CD14-positive monocyte (primary cell): ENCODE measurements at regions of chr9 and their contacts with region 1.

Region 1: GRCh38 chr9:102521097-102521755 is 473.9 kb upstream of the CYLC2 start:
- DNase-seq: no peak
- H3K4me3 ChIP-seq: no peak overlapping the region
- H3K4me3 Mint-ChIP-seq: no peak overlapping the region
- H3K27ac ChIP-seq: no peak overlapping the region
- H3K27ac Mint-ChIP-seq: no peak overlapping the region
- H3K4me1 ChIP-seq: no peaks in the 10 kb centered on the region
- H3K4me1 Mint-ChIP-seq: no peaks in the 10 kb centered on the region
- H3K27me3 ChIP-seq: no peaks in the 10 kb centered on the region
- H3K27me3 Mint-ChIP-seq: no peaks in the 10 kb centered on the region
- CTCF ChIP-seq: no peak

Region 2: GRCh38 chr9:102354041-102354440 is 167.2 kb before region 1 on chr9:
- intact Hi-C with region 1: loop called in 1 of 2 experiments (anchors 5 kb)
- DNase-seq: no peak
- H3K4me3 ChIP-seq: no peak overlapping the region
- H3K4me3 Mint-ChIP-seq: no peak overlapping the region
- H3K27ac ChIP-seq: no peak overlapping the region
- H3K27ac Mint-ChIP-seq: no peak overlapping the region
- H3K4me1 ChIP-seq: no peaks in the 10 kb centered on the region
- H3K4me1 Mint-ChIP-seq: no peaks in the 10 kb centered on the region
- H3K27me3 ChIP-seq: no peaks in the 10 kb centered on the region
- H3K27me3 Mint-ChIP-seq: no peaks in the 10 kb centered on the region
- CTCF ChIP-seq: no peak

Region 3: DNA sequence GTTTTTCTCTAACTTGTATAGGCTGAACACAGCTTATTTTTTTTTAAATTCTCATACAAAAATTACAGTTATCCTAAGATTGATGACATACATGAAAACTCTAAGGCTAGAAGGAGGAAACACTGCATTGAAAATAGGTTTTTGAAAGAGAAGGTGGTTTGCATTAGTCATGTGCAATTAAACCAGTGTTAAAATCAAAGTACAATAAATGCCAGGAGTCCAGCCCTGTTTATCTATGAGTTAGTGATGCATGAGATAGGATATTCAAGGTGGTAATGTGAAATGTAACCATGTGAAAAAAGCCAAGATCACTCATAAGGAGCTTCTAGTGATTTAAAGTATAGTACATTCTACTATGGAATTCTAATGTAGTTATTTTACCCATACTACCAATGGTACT is 29.0 kb after region 1 on chr9:
- intact Hi-C with region 1: no loop called
- DNase-seq: no peak
- H3K4me3 ChIP-seq: no peak overlapping the region
- H3K4me3 Mint-ChIP-seq: no peak overlapping the region
- H3K27ac ChIP-seq: no peak overlapping the region
- H3K27ac Mint-ChIP-seq: no peak overlapping the region
- H3K4me1 ChIP-seq: no peaks in the 10 kb centered on the region
- H3K4me1 Mint-ChIP-seq: no peaks in the 10 kb centered on the region
- H3K27me3 ChIP-seq: no peaks in the 10 kb centered on the region
- H3K27me3 Mint-ChIP-seq: no peaks in the 10 kb centered on the region
- CTCF ChIP-seq: no peak